ENCODE measurements at regions of chr11 and their contacts with region 1.

Region 1: DNA sequence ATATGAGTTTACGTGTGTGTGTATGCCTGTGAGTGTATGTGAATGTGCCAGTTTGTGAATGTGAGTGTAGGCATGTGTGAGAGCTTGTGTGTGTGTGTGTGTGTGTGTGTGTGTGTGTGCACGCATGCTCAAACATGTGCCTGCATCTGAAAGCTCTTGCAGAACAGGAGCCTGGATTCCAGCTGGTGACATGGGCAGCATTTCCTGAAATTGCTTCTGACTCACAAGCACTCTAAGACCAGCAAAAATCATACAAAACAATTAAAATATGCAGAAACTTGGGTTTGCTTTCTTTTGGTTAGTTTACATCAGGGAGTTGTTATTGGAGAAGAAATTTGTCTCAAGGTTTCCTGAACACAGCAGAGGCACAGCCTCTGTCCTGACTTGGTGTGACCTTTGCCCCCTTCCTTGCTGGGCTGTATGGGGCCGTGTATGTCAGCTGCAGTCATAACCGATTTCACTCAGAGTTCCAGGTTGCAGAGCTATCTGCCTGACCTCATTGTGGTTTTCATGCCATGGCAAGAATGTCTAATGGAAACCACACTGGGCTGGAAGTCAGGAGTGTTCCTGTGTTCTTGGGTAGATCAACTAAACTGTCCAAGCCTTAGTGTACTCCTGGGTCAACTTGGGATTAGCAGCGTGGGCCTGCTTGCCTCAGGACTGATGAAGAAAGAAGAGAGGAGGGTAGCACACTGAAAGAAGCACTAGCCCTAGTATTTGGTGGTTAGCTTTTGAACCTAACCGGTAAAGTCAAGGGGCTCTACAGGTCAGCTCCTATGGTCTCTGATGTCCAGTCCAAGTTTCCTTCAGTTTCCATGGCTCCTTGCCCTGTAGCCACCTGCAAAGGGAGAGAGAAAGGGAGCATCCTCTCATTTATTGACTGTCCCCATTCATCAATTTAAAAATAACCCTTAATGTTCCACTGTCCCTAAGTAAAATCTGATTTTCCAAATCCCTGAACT is 143.7 kb downstream of the SNX19 start:
- DNase-seq: peak in 2 of 5 donors; percentile 33 to 44
- ATAC-seq: peak; percentile 42 to 73 (median 55)
- H3K4me3 ChIP-seq: no peak overlapping the region
- H3K27ac ChIP-seq: peak overlapping the region in 1 of 12 donors; percentile 24
- H3K4me1 ChIP-seq: peaks cover 0 to 41% (median 22%) of the 10 kb centered on the region in 12 donors
- H3K27me3 ChIP-seq: no peaks in the 10 kb centered on the region
- CTCF ChIP-seq: no peak
- POLR2A ChIP-seq: no peak

Region 2: GRCh38 chr11:130689222-130689908 is 83.2 kb before region 1 on chr11:
- intact Hi-C with region 1: loop called in 1 of 10 experiments (anchors 10 kb)
- DNase-seq: no peak
- ATAC-seq: peak in 1 of 4 donors; percentile 22
- H3K4me3 ChIP-seq: no peak overlapping the region
- H3K27ac ChIP-seq: no peak overlapping the region
- H3K4me1 ChIP-seq: no peaks in the 10 kb centered on the region
- H3K27me3 ChIP-seq: no peaks in the 10 kb centered on the region
- CTCF ChIP-seq: no peak
- POLR2A ChIP-seq: no peak

Measured in heart left ventricle (tissue), 16 donors.